ENCODE measurements at regions of chr4 and their contacts with region 1.

Region 1: GRCh38 chr4:47274901-47275300 is 188.6 kb downstream of the COMMD8 start:
- DNase-seq: no peak
- H3K4me3 ChIP-seq: no peak overlapping the region
- H3K27ac ChIP-seq: no peak overlapping the region
- H3K4me1 ChIP-seq: no peaks in the 10 kb centered on the region
- H3K27me3 ChIP-seq: no peaks in the 10 kb centered on the region
- CTCF ChIP-seq: no peak
- POLR2A ChIP-seq: no peak

Region 2: GRCh38 chr4:47287745-47288144 is 12.8 kb after region 1 on chr4:
- intact Hi-C with region 1: loop called (anchors 1 kb)
- DNase-seq: no peak
- H3K4me3 ChIP-seq: no peak overlapping the region
- H3K27ac ChIP-seq: no peak overlapping the region
- H3K4me1 ChIP-seq: no peaks in the 10 kb centered on the region
- H3K27me3 ChIP-seq: no peaks in the 10 kb centered on the region
- CTCF ChIP-seq: no peak
- POLR2A ChIP-seq: no peak

Region 3: DNA sequence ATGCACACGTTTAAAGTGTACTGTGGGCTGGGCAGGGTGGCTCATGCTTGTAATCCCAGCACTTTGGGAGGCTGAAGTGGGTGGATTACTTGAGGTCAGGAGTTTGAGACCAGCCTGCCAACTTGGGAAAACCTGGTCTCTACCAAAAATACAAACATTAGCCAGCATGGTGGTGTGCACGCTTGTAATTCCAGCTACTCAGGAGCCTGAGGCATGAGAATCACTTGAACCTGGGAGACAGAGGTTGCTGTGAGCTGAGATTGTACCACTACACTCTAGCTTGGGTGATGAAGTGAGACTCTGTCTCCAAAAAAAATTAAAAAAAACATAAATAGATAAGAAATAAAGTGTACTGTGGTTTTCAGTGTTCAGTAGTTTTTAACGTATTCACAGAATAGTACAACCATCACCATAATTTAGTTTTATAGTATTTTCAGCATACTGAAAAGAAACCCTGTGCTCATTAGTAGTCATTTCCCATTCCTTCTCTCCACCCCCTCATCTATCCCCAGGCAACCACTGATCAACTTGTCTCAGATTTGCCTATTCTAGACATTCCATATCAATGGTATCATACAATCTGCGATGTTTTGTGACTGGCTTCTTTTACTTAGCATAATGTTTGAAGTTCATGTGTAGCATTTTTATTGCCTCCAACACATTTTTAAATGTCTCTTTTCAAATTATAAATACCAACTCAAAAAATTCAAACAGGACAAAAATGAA is 1085.5 kb after region 1 on chr4:
- intact Hi-C with region 1: no loop called
- DNase-seq: no peak
- H3K4me3 ChIP-seq: no peak overlapping the region
- H3K27ac ChIP-seq: no peak overlapping the region
- H3K4me1 ChIP-seq: no peaks in the 10 kb centered on the region
- H3K27me3 ChIP-seq: no peaks in the 10 kb centered on the region
- CTCF ChIP-seq: no peak
- POLR2A ChIP-seq: no peak

Region 4: GRCh38 chr4:48431401-48431800 is 1156.5 kb after region 1 on chr4:
- intact Hi-C with region 1: no loop called
- DNase-seq: no peak
- H3K4me3 ChIP-seq: no peak overlapping the region
- H3K27ac ChIP-seq: no peak overlapping the region
- H3K4me1 ChIP-seq: no peaks in the 10 kb centered on the region
- H3K27me3 ChIP-seq: no peaks in the 10 kb centered on the region
- CTCF ChIP-seq: no peak
- POLR2A ChIP-seq: no peak